ENCODE measurements at regions of chr17 and their contacts with region 1.

Region 1: GRCh38 chr17:31524926-31525800 is 133.7 kb downstream of the RAB11FIP4 start:
- DNase-seq: no peak
- ATAC-seq: peak; percentile 98
- H3K4me3 ChIP-seq: no peak overlapping the region
- H3K27ac ChIP-seq: no peak overlapping the region
- H3K4me1 ChIP-seq: no peaks in the 10 kb centered on the region; the same call in 1 of the 2 replicates
- H3K27me3 ChIP-seq: no peaks in the 10 kb centered on the region
- CTCF ChIP-seq: peak; percentile 90 to 97 (median 95); a peak in 5 of 6 replicates
- EP300 ChIP-seq: no peak
- POLR2A ChIP-seq: peak; percentile 44; the same call in 1 of the 2 replicates
- RAD21 ChIP-seq: peak; percentile 98

Region 2: DNA sequence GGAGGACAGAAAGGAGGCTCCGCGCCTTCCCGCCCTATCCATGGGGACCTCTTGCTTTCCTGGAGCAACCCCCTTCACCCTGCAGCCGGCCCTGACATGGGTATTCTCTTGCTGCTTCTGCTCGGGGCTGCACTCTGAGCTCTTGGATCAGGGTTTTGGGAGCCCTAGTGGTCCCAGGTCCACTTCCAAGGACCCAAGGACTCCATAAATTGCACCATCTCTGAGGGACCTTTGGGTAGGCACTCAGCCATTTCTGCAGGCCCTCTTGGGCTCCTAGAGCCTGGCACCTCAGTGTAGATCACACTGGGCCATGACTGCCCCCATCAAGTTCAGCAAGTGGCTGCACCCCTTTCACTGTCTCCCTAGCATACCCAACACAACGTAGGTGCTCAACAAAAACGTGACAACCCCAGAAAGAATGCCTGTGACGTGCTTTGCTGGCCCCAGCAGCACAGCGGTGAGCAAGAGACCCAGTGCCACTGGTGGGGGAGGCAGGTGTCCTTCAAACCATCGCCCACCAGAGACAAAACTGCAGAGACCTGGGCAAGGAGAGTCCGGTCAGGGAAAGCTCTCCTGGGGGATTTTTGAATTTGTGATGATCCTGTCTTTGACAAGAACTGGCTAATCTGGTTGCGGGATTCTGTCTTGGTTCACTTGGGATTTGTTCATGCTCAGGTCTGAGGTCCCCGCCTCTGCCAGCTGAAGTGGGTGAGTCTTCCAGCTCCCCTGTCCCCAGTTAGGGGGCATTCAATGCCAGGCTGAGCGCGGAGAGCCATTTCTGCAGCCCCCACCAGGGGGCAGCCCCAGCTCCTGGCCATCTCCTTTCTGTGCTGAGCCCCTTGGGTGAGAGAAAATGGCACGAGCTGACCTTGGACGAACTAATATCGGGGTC is 136.1 kb before region 1 on chr17:
- CTCF ChIA-PET with region 1: interaction called, 5 read pairs
- POLR2A ChIA-PET with region 1: no interaction called
- RAD21 ChIA-PET with region 1: interaction called, 4 read pairs
- SMC1A ChIA-PET with region 1: interaction called, 4 read pairs
- in situ Hi-C with region 1: loop called (anchors 5 kb)
- intact Hi-C with region 1: loop called (anchors 1 kb)
- DNase-seq: no peak
- ATAC-seq: peak; percentile 85
- H3K4me3 ChIP-seq: no peak overlapping the region
- H3K27ac ChIP-seq: no peak overlapping the region
- H3K4me1 ChIP-seq: no peaks in the 10 kb centered on the region
- H3K27me3 ChIP-seq: peaks cover 12% of the 10 kb centered on the region in 2 experiments
- CTCF ChIP-seq: peak; percentile 57 to 88 (median 71)
- EP300 ChIP-seq: no peak
- POLR2A ChIP-seq: no peak
- RAD21 ChIP-seq: peak; percentile 58

Region 3: GRCh38 chr17:31437720-31438420 is 87.3 kb before region 1 on chr17:
- CTCF ChIA-PET with region 1: interaction called, 95 read pairs
- POLR2A ChIA-PET with region 1: no interaction called
- RAD21 ChIA-PET with region 1: interaction called, 64 read pairs
- SMC1A ChIA-PET with region 1: interaction called, 81 read pairs
- in situ Hi-C with region 1: loop called (anchors 5 kb)
- intact Hi-C with region 1: loop called (anchors 1 kb)
- DNase-seq: no peak
- ATAC-seq: no peak; the same call in 2 of the 3 replicates
- H3K4me3 ChIP-seq: no peak overlapping the region
- H3K27ac ChIP-seq: no peak overlapping the region
- H3K4me1 ChIP-seq: no peaks in the 10 kb centered on the region
- H3K27me3 ChIP-seq: no peaks in the 10 kb centered on the region
- CTCF ChIP-seq: no peak
- EP300 ChIP-seq: no peak
- POLR2A ChIP-seq: no peak
- RAD21 ChIP-seq: no peak

Region 4: GRCh38 chr17:31444026-31444425 is 81.1 kb before region 1 on chr17:
- CTCF ChIA-PET with region 1: interaction called, 95 read pairs
- POLR2A ChIA-PET with region 1: no interaction called
- RAD21 ChIA-PET with region 1: interaction called, 64 read pairs
- SMC1A ChIA-PET with region 1: interaction called, 81 read pairs
- in situ Hi-C with region 1: loop called (anchors 5 kb)
- intact Hi-C with region 1: no loop called
- DNase-seq: no peak
- ATAC-seq: no peak
- H3K4me3 ChIP-seq: no peak overlapping the region
- H3K27ac ChIP-seq: no peak overlapping the region
- H3K4me1 ChIP-seq: no peaks in the 10 kb centered on the region
- H3K27me3 ChIP-seq: no peaks in the 10 kb centered on the region
- CTCF ChIP-seq: no peak
- EP300 ChIP-seq: no peak
- POLR2A ChIP-seq: no peak
- RAD21 ChIP-seq: no peak

Region 5: GRCh38 chr17:31487648-31488263 is 37.4 kb before region 1 on chr17:
- CTCF ChIA-PET with region 1: interaction called, 7 read pairs
- POLR2A ChIA-PET with region 1: interaction called, 3 read pairs
- RAD21 ChIA-PET with region 1: interaction called, 23 read pairs
- SMC1A ChIA-PET with region 1: interaction called, 11 read pairs
- in situ Hi-C with region 1: no loop called
- intact Hi-C with region 1: no loop called
- DNase-seq: no peak
- ATAC-seq: peak; percentile 80
- H3K4me3 ChIP-seq: peak overlapping the region; percentile 92
- H3K27ac ChIP-seq: no peak overlapping the region
- H3K4me1 ChIP-seq: peaks cover 40% of the 10 kb centered on the region
- H3K27me3 ChIP-seq: no peaks in the 10 kb centered on the region
- CTCF ChIP-seq: peak in 1 of 3 experiments; percentile 18; a peak in 1 of 6 replicates
- EP300 ChIP-seq: no peak
- POLR2A ChIP-seq: peak; percentile 73
- RAD21 ChIP-seq: 0 out of 2 replicates have a peak, but pooled peaks have one; percentile 4

Region 6: GRCh38 chr17:31494259-31495021 is 30.7 kb before region 1 on chr17:
- CTCF ChIA-PET with region 1: interaction called, 8 read pairs
- POLR2A ChIA-PET with region 1: interaction called, 8 read pairs
- RAD21 ChIA-PET with region 1: interaction called, 5 read pairs
- SMC1A ChIA-PET with region 1: interaction called, 11 read pairs
- in situ Hi-C with region 1: no loop called
- intact Hi-C with region 1: no loop called
- DNase-seq: peak; percentile 83
- ATAC-seq: peak; percentile 69
- H3K4me3 ChIP-seq: peak overlapping the region; percentile 56; the same call in 1 of the 2 replicates
- H3K27ac ChIP-seq: peak overlapping the region; percentile 92
- H3K4me1 ChIP-seq: peaks cover 65% of the 10 kb centered on the region
- H3K27me3 ChIP-seq: no peaks in the 10 kb centered on the region
- CTCF ChIP-seq: no peak
- EP300 ChIP-seq: peak; percentile 58 to 67; a peak in 3 of 4 replicates
- POLR2A ChIP-seq: peak; percentile 40; the same call in 1 of the 2 replicates
- RAD21 ChIP-seq: no peak

Region 7: DNA sequence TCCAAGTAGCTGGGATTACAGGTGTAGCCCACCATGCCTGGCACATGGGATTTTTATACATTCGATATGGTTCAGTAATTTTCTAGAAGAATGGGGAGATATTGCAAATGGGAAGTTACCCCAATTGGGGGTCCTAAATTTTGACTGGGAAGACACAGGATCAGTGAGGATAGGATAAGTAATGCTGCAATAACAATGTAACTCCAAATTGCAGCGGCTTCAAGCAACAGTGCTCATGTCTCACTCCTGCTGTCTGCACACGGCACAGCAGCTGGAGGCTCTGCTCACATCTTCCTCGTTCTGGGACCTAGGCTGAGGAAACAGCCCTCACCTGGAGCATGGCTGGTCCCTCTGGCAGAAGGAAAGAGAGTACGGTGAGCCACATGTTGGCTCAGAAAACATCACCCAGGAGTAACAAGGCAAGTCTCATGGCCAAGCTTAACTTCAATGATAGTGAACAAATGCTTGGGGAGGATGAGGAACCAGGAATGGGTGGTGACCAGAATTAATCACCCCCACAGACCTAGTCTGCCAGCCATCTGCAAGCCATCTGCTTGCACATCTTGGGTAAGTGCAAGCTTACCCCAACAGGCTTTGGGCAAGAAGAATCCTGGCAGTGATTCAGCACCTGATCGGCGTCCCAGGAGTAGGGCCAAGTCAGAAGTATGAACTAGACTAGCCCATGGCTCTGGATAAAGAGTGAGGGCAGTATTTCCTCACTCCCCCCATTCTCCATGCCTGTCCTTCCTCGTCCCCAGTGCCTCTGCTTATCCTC is 104.7 kb after region 1 on chr17:
- CTCF ChIA-PET with region 1: no interaction called
- POLR2A ChIA-PET with region 1: no interaction called
- RAD21 ChIA-PET with region 1: no interaction called
- SMC1A ChIA-PET with region 1: no interaction called
- in situ Hi-C with region 1: no loop called
- intact Hi-C with region 1: no loop called
- DNase-seq: no peak
- ATAC-seq: no peak
- H3K4me3 ChIP-seq: no peak overlapping the region
- H3K27ac ChIP-seq: no peak overlapping the region
- H3K4me1 ChIP-seq: no peaks in the 10 kb centered on the region
- H3K27me3 ChIP-seq: no peaks in the 10 kb centered on the region
- CTCF ChIP-seq: no peak
- EP300 ChIP-seq: no peak
- POLR2A ChIP-seq: no peak
- RAD21 ChIP-seq: no peak

Measured in GM12878 (cell line).